B cell (primary cell): ENCODE measurements at regions of chr2 and their contacts with region 1.

Region 1: GRCh38 chr2:11154923-11155380 is 315 bp upstream of the SLC66A3 start:
- DNase-seq: peak; percentile 96
- ATAC-seq: peak; percentile 89
- H3K4me3 ChIP-seq: peak overlapping the region; percentile 30 to 87 (median 81)
- H3K4me3 Mint-ChIP-seq: peak overlapping the region; percentile 88
- H3K27ac ChIP-seq: peak overlapping the region; percentile 89 to 93
- H3K27ac Mint-ChIP-seq: peak overlapping the region; percentile 93
- H3K4me1 ChIP-seq: peaks cover 15 to 20% of the 10 kb centered on the region in 2 donors
- H3K4me1 Mint-ChIP-seq: peaks cover 18% of the 10 kb centered on the region
- H3K27me3 ChIP-seq: peaks cover 0 to 5% (median 0%) of the 10 kb centered on the region in 4 experiments
- H3K27me3 Mint-ChIP-seq: no peaks in the 10 kb centered on the region
- CTCF ChIP-seq: no peak

Region 2: GRCh38 chr2:11344342-11344955 is 189.5 kb after region 1 on chr2 and contains the start of gene ROCK2:
- CTCF ChIA-PET with region 1: no interaction called
- POLR2A ChIA-PET with region 1: interaction called, 4 read pairs
- intact Hi-C with region 1: loop called (anchors 1 kb)
- DNase-seq: peak; percentile 83
- ATAC-seq: peak; percentile 69
- H3K4me3 ChIP-seq: peak within 1 kb of the TSS; percentile 56 to 91 (median 81)
- H3K4me3 Mint-ChIP-seq: peak within 1 kb of the TSS; percentile 99
- H3K27ac ChIP-seq: peak within 1 kb of the TSS; percentile 42 to 67
- H3K27ac Mint-ChIP-seq: peak within 1 kb of the TSS; percentile 97
- H3K4me1 ChIP-seq: peaks cover 16 to 19% of the 10 kb centered on the region in 2 donors
- H3K4me1 Mint-ChIP-seq: peaks cover 38% of the 10 kb centered on the region
- H3K27me3 ChIP-seq: no peaks in the 10 kb centered on the region
- H3K27me3 Mint-ChIP-seq: no peaks in the 10 kb centered on the region
- CTCF ChIP-seq: no peak
- total RNA-seq, gene ROCK2: 30.2 and 32.8 TPM in 2 replicates